Astrocyte of the cerebellum (primary cell): ENCODE measurements at regions of chr16 and their contacts with region 1.

Region 1: DNA sequence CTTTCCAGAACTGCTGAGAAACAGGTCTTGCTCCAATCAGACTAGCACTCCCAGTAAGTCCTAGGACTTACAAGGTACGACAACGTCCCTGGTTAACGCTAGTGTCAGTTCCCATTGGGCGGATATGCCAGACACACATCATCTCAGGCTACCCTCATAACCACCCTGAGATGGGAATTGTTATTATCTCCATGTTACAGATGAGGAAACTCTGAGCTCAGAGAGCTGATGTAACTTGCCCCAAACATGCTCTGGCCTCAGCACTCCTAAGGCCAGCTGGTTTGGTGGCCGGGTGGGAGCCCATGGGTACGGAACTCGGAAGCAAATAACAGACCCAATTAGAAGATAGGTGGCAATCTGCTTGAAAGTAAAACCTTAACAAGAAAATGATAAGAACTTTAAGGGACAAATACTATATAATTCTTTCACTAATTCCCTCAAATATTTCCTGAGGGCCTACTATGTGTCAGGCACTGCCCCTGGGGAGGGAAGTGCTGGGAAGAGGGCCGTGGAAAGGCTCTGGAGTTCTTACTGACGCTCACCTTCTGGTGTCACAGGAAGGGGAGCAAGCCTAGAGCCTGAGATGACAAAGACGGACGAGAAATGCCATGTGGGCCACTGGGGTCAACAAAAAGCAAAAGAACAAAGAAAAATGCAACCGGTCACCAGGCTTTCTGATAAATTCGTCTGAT is 6.9 kb downstream of the CREBBP start:
- DNase-seq: no peak
- H3K4me3 ChIP-seq: no peak overlapping the region
- CTCF ChIP-seq: no peak

Region 2: DNA sequence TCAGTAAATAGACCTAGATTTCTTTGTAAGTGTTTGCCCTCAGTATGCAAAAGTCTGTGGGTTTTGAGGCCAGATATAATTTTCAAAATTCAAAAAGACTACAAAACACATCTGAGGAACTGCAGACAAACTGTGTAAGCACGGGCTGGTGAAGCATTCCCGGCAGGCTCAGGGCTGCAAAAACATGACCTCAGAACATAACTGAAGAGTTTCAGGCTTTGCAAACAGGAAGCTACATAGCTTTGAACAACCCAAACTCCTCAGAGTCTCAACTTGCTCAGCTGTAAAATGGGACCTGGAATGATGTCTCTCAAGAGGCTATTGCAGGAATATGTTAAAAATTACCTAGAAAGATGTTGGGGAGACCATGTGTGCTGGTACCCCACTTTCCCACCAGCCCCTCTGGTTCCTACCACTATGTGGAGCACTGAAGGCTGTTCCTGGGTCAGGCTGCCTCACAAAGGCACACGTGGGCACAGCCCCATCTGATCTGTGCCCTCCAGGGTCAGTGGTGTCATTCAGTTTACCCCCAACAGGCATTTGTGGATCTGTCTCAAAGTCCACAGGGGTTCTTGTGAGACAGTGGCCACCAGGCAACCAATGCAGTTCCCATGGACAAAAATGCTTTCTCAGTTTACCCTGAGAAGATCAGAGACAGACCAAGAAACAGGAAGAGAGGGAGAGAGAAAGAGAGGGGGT is 66.1 kb before region 1 on chr16:
- in situ Hi-C with region 1: no loop called
- DNase-seq: no peak
- H3K4me3 ChIP-seq: no peak overlapping the region
- CTCF ChIP-seq: no peak

Region 3: GRCh38 chr16:3907586-3907985 is 34.0 kb after region 1 on chr16:
- in situ Hi-C with region 1: no loop called
- DNase-seq: no peak
- H3K4me3 ChIP-seq: no peak overlapping the region
- CTCF ChIP-seq: no peak

Region 4: DNA sequence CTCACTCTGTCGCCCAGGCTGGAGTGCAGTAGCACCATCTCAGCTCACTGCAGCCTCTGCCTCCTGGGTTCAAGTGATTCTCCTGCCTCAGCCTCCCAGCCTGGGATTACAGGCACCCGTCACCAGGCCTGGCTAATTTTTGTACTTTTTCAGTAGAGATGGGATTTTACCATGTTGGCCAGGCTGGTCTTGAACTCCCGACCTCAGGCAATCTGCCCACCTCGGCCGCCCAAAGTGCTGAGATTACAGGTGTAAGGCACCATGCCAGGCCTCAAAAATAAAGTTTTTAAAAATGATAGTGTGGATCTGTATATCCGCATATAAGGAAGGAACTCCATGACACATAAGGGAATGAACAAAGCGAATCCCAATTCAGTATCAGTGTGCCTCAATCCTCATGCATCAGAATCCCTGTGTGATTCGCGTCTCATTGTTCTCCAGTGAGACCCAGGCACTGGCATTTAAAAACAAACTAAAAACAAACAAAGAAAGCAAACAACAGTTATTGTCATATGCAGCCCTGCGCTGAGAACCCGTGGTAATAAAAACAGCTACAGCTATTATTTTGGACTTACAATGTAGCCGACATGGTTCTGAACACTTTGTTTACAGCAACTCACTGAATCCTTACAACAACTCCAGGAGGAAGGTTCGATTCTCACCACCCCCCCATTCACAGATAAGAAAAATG is 61.0 kb after region 1 on chr16:
- in situ Hi-C with region 1: no loop called
- DNase-seq: no peak
- H3K4me3 ChIP-seq: no peak overlapping the region
- CTCF ChIP-seq: no peak

Region 5: DNA sequence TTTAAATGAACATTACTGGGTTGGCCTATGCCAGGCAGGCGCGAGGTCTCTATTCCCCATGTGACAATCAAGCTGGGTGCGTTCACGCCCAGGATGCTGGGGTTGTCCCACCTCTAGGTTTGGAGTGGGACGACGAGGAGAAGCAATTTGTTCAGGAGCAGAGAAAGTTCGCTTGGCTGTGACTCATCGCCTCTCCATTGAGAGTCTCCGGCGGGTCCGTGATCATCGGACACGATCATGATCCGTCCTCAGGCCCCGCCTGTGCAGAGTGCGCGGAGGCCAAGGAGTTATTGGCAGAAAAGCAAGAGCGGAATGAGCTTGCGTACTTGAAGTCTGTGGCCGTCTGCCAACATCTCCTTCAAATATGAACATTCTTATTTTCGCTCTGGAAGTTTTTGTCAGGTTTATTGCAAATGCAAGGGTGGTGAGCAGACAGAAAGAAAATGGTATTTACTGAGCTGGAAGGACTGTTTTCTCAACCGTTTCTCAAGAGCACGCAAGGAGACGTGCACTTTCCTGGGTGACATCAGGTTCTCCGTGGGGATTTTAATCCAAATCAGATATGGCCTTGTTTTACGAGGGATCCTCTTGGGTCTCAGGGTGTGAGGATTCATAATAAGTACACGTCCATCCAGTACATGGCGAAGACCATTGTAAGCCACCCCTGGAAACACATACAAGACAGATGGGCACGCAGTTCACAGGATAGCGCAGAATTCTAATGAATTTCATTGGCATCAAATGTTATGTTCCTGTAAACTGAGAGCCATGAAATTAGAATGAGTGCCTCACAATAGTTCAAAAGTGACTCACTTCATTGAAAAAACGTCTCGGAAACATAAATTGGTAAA is 76.9 kb after region 1 on chr16:
- in situ Hi-C with region 1: loop called (anchors 5 kb)
- DNase-seq: peak; percentile 96
- H3K4me3 ChIP-seq: peak overlapping the region; percentile 27
- CTCF ChIP-seq: no peak